B cell (primary cell): ENCODE measurements at regions of chr19 and their contacts with region 1.

Region 1: DNA sequence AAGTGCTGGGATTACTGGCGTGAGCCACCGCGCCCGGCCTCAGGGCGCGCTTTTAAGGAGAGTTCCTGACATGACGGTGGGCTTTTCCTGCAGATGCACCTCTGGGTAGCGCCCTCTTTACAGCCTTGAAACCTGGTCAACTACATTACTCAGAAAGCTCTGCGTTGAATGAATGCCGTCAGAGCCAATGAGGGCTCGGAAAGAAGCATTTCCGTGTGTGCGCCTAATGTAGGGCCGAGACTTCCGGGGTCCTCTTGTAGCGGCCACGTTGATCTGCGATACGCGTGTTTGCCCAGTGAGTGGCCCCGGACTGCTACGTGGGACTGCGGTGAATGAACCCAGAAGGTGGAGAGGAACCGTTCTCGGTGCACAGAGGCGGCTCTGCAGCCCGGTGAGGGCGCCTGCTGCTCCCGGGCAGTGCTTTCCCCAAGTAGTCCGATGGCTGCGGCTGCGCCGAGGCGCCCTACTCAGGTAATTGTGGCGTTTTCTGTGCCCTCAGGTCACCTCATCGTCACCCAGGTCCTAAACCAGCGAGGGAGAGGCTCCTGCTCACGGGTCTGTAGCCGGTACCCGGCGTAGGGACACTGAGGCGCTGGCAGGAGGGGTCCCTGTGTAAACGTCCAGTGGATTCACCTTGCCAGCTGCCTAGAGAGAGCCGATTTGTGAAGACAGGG is 4.9 kb upstream of the ZNF552 start:
- DNase-seq: peak; percentile 90
- ATAC-seq: peak; percentile 83
- H3K4me3 ChIP-seq: peak overlapping the region; percentile 78 to 92 (median 83)
- H3K4me3 Mint-ChIP-seq: peak overlapping the region; percentile 94
- H3K27ac ChIP-seq: peak overlapping the region; percentile 75 to 88
- H3K27ac Mint-ChIP-seq: peak overlapping the region; percentile 97
- H3K4me1 ChIP-seq: peaks cover 12 to 17% of the 10 kb centered on the region in 2 donors
- H3K4me1 Mint-ChIP-seq: peaks cover 58% of the 10 kb centered on the region
- H3K27me3 ChIP-seq: no peaks in the 10 kb centered on the region
- H3K27me3 Mint-ChIP-seq: no peaks in the 10 kb centered on the region
- CTCF ChIP-seq: no peak

Region 2: DNA sequence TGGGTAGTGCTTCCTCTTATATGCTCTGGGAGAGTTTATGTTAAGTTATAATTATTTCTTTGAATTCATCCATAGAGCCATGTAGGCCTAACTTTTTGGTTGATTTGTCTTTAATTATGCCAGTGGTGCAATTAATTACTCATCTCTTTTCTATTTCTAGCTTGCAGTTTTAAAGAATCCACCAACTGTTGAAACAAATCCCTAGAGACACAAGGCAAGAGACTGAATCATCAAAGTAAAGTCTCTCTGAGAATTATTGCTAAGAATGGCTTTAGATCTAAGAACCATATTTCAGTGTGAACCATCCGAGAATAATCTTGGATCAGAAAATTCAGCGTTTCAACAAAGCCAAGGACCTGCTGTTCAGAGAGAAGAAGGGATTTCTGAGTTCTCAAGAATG is 143.7 kb before region 1 on chr19:
- CTCF ChIA-PET with region 1: no interaction called
- POLR2A ChIA-PET with region 1: interaction called, 12 read pairs
- intact Hi-C with region 1: no loop called
- DNase-seq: no peak
- ATAC-seq: no peak
- H3K4me3 ChIP-seq: no peak overlapping the region
- H3K4me3 Mint-ChIP-seq: no peak overlapping the region
- H3K27ac ChIP-seq: no peak overlapping the region
- H3K27ac Mint-ChIP-seq: no peak overlapping the region
- H3K4me1 ChIP-seq: no peaks in the 10 kb centered on the region
- H3K4me1 Mint-ChIP-seq: no peaks in the 10 kb centered on the region
- H3K27me3 ChIP-seq: peaks cover 0 to 4% (median 2%) of the 10 kb centered on the region in 4 experiments
- H3K27me3 Mint-ChIP-seq: peaks cover 37% of the 10 kb centered on the region
- CTCF ChIP-seq: no peak

Region 3: DNA sequence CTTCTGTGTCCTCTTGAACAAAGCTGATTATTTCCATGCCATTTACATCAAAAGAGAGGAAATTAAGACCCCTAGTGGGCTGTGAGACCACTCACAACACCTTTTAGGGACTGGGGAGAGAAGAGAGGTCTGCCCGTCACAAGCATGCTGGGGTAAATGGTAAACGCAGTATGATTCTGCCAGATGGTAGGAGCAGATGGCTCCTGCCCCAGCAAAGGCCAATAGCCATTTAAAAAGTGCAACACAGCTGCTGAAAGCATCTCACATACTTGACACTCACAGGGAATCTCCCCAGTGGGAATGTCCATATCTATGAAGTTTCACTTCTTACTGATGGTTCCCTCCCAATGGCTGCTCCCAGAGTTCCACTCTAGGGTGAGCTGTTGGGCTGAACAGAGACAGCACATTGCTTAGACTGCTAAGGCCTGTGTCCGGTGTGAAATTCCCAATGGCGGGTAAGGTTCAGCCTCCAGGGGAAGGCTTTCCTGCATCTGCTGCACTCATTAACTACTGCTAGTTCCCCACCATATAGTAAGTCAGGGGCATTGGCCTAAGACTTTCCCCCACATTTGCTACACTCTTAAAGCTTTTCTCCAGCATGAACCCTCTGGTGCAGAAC is 99.6 kb before region 1 on chr19:
- CTCF ChIA-PET with region 1: no interaction called
- POLR2A ChIA-PET with region 1: no interaction called
- intact Hi-C with region 1: loop called (anchors 5 kb)
- DNase-seq: no peak
- ATAC-seq: no peak
- H3K4me3 ChIP-seq: no peak overlapping the region
- H3K4me3 Mint-ChIP-seq: no peak overlapping the region
- H3K27ac ChIP-seq: no peak overlapping the region
- H3K27ac Mint-ChIP-seq: no peak overlapping the region
- H3K4me1 ChIP-seq: no peaks in the 10 kb centered on the region
- H3K4me1 Mint-ChIP-seq: peaks cover 14% of the 10 kb centered on the region
- H3K27me3 ChIP-seq: no peaks in the 10 kb centered on the region
- H3K27me3 Mint-ChIP-seq: no peaks in the 10 kb centered on the region
- CTCF ChIP-seq: no peak

Region 4: DNA sequence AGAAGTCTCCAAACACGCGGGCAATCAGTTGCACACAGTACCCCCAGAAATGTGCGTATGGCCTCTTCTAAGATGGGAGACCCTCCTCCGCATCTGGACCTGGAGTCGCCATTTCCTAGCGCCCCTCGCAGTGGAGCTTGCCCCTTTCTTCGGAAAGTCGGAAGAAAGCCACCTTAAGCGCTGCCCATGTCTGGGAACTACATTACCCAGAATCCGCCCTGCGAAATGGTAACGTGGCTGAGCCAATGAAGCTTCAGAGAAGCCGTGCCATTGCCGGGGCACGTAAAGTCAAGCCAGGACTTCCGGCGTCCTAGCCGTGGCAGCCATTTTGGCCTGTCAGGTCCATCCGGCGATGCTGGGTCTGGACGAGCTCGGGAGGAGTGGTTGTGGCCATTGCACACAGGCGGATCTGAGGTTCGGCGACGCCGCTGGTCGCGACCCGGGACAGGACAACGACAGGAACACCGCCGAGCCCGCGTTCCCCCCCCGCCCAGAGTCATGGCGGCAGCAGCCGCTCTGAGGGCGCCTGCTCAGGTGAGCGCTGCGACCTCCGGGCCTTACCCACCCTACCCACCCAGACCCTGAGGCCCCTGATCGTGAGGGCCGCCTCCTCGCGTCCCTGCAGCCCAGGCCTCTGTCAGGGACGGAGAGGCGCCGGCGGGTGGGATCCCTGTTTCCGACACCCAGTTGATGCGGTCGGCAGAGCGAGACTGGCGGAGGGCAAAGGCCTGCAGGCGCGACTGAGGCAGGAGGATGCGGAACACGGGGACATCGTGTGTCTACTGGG is 50.1 kb before region 1 on chr19 and contains the start of gene ZNF586:
- CTCF ChIA-PET with region 1: interaction called, 3 read pairs
- POLR2A ChIA-PET with region 1: interaction called, 3 read pairs
- intact Hi-C with region 1: loop called (anchors 1 kb)
- DNase-seq: peak; percentile 91
- ATAC-seq: peak; percentile 99
- H3K4me3 ChIP-seq: peak within 1 kb of the TSS; percentile 65 to 86 (median 82)
- H3K4me3 Mint-ChIP-seq: peak within 1 kb of the TSS; percentile 94
- H3K27ac ChIP-seq: peak within 1 kb of the TSS; percentile 75 to 83
- H3K27ac Mint-ChIP-seq: peak within 1 kb of the TSS; percentile 90
- H3K4me1 ChIP-seq: peaks cover 23 to 49% of the 10 kb centered on the region in 2 donors
- H3K4me1 Mint-ChIP-seq: peaks cover 37% of the 10 kb centered on the region
- H3K27me3 ChIP-seq: no peaks in the 10 kb centered on the region
- H3K27me3 Mint-ChIP-seq: no peaks in the 10 kb centered on the region
- CTCF ChIP-seq: no peak
- total RNA-seq, gene ZNF586: 48.0 and 51.3 TPM in 2 replicates

Region 5: DNA sequence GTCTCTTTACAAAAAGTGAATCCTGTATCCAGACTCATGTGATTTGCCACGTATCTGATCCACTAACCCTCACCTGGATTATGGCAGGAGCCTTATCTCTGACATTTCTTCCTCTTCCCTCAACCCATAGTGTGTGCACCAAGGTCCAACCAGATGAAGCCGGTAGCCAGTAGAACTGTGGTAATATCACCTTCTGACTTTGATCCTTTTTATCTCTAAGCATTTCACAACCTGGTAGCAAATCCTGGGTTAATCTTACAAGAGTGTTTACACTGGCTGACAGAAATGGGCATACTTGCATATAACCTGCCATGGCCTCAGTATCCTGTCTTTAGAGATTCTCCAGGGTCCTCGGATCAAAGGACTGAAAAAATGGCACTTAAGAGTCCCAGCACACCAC is 94.9 kb after region 1 on chr19:
- CTCF ChIA-PET with region 1: no interaction called
- POLR2A ChIA-PET with region 1: interaction called, 10 read pairs
- intact Hi-C with region 1: loop called (anchors 5 kb)
- DNase-seq: no peak
- ATAC-seq: no peak
- H3K4me3 ChIP-seq: no peak overlapping the region
- H3K4me3 Mint-ChIP-seq: peak overlapping the region; percentile 96
- H3K27ac ChIP-seq: no peak overlapping the region
- H3K27ac Mint-ChIP-seq: peak overlapping the region; percentile 26
- H3K4me1 ChIP-seq: peaks cover 9 to 13% of the 10 kb centered on the region in 2 donors
- H3K4me1 Mint-ChIP-seq: peaks cover 40% of the 10 kb centered on the region
- H3K27me3 ChIP-seq: no peaks in the 10 kb centered on the region
- H3K27me3 Mint-ChIP-seq: no peaks in the 10 kb centered on the region
- CTCF ChIP-seq: no peak